ENCODE measurements at regions of chr1 and their contacts with region 1.

Region 1: DNA sequence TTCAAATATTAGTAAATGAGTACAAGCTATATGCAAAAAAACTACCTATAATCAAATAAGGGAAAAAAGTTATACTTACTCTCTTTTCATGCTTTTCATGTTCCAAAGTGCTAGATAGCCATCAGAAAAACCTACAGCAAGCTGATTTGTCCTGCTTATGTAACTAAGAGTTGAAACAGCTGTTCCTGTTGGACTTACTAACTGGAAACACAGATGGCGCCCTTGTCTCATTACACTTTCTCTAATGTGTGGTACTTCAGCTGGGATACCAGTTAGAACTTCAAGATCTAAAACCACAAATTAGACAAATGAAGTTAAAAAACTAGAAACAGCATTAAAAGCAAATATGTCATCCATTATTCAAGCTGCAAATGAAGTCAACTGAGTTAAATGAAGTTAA is 24.3 kb downstream of the AHCTF1 start:
- DNase-seq: peak; percentile 34
- H3K4me3 ChIP-seq: no peak overlapping the region
- H3K27ac ChIP-seq: no peak overlapping the region
- H3K27me3 ChIP-seq: no peaks in the 10 kb centered on the region
- CTCF ChIP-seq: peak; percentile 53

Region 2: DNA sequence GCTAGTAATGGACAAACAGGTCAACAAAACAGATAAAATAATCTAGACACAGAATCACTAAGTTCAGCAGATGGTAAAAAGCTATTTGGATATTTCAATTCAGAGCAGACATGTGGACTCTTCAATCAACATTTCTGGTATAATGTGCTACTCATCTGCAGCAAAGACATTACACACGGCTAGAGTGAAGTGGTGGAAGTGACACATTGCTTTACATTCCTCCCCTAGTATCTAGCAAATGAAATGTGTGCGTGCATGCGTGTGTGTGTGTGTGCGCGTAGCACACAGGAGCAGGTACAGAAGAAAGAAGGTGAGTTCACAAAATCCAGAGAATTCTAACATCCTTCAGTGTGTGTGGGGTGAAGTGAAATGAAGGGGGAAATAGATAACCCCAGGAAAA is 16.0 kb after region 1 on chr1:
- CTCF ChIA-PET with region 1: interaction called, 25 read pairs
- POLR2A ChIA-PET with region 1: no interaction called
- DNase-seq: no peak
- H3K4me3 ChIP-seq: no peak overlapping the region
- H3K27ac ChIP-seq: no peak overlapping the region
- H3K27me3 ChIP-seq: no peaks in the 10 kb centered on the region
- CTCF ChIP-seq: no peak

Region 3: GRCh38 chr1:247078261-247079140 is 171.0 kb after region 1 on chr1 and contains the start of gene ZNF670:
- CTCF ChIA-PET with region 1: interaction called, 39 read pairs
- POLR2A ChIA-PET with region 1: no interaction called
- DNase-seq: peak; percentile 93
- H3K4me3 ChIP-seq: peak within 1 kb of the TSS; percentile 83
- H3K27ac ChIP-seq: peak within 1 kb of the TSS; percentile 78
- H3K27me3 ChIP-seq: no peaks in the 10 kb centered on the region
- CTCF ChIP-seq: peak; percentile 69
- polyA plus RNA-seq, gene ZNF670: 2.2 and 3.3 TPM in 2 replicates

Region 4: GRCh38 chr1:247373721-247374141 is 466.3 kb after region 1 on chr1:
- CTCF ChIA-PET with region 1: interaction called, 18 read pairs
- POLR2A ChIA-PET with region 1: no interaction called
- DNase-seq: no peak
- H3K4me3 ChIP-seq: peak overlapping the region; percentile 29; the same call in 1 of the 2 replicates
- H3K27ac ChIP-seq: no peak overlapping the region
- H3K27me3 ChIP-seq: no peaks in the 10 kb centered on the region
- CTCF ChIP-seq: peak; percentile 60